ENCODE measurements at regions of chr1 and their contacts with region 1.

Region 1: GRCh38 chr1:46489638-46490405 is at the start of gene DMBX1:
- DNase-seq: peak; percentile 54
- H3K4me3 Mint-ChIP-seq: peak within 1 kb of the TSS; percentile 70
- H3K27ac Mint-ChIP-seq: no peak within 1 kb of the TSS
- H3K4me1 Mint-ChIP-seq: peaks cover 18% of the 10 kb centered on the region
- H3K27me3 Mint-ChIP-seq: peaks cover 80% of the 10 kb centered on the region
- total RNA-seq, gene DMBX1: not detected

Region 2: GRCh38 chr1:46522184-46522968 is 32.6 kb after region 1 on chr1:
- CTCF ChIA-PET with region 1: interaction called, 13 read pairs
- intact Hi-C with region 1: no loop called
- DNase-seq: peak; percentile 59
- H3K4me3 Mint-ChIP-seq: no peak overlapping the region
- H3K27ac Mint-ChIP-seq: no peak overlapping the region
- H3K4me1 Mint-ChIP-seq: peaks cover 11% of the 10 kb centered on the region
- H3K27me3 Mint-ChIP-seq: peaks cover 28% of the 10 kb centered on the region

Region 3: DNA sequence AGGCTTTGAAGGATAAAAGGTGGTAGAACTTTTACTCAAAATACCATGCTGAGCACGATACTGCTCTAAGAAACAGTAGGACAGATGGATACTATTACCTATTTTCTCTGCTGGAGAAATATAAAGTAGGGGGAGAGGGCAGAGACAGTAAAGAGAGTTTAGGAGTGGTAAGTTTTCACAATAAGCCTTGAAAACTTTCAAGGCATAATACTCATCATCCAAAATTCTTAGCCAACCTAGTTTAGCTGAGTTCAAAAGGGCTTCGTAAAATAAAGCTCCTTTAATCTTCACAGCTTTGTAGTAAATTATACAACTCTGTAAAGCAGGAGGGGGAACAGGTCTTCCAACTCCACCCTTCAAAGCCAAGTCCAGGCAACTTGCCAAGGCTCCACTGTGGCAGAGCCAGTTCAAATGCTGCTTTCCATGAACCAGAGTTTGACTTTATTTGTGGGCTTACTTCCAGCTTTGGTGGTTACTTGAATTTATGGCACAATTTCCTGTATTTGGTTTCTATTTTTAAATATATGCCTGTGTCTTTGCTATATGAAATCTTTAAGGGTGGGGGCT is 197.4 kb after region 1 on chr1:
- CTCF ChIA-PET with region 1: no interaction called
- intact Hi-C with region 1: no loop called
- DNase-seq: no peak
- H3K4me3 Mint-ChIP-seq: no peak overlapping the region
- H3K27ac Mint-ChIP-seq: no peak overlapping the region
- H3K4me1 Mint-ChIP-seq: peaks cover 12% of the 10 kb centered on the region
- H3K27me3 Mint-ChIP-seq: no peaks in the 10 kb centered on the region

Region 4: GRCh38 chr1:47362828-47363227 is 873.0 kb after region 1 on chr1:
- CTCF ChIA-PET with region 1: no interaction called
- intact Hi-C with region 1: no loop called
- DNase-seq: no peak
- H3K4me3 Mint-ChIP-seq: no peak overlapping the region
- H3K27ac Mint-ChIP-seq: no peak overlapping the region
- H3K4me1 Mint-ChIP-seq: peaks cover 11% of the 10 kb centered on the region
- H3K27me3 Mint-ChIP-seq: no peaks in the 10 kb centered on the region